OCI-LY7 (cell line): ENCODE measurements at regions of chr18 and their contacts with region 1.

Region 1: DNA sequence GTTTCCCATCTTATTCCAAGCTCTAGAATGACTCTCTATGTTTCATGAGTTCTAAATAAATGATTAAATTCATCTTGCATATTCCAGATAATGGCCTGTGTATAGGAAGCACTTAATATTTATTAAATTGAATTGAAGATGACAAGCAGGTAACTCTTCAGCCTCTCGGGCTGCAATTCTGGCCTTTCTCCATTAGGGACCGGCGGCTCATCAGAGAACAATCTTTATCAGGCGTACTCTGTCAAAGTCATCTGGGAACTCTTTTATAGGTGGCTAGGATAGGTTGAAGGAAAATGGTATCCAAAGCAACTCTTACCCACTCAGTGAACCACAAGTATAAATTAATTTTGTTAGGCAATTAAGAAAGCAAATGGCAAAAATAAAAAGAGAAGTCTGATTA is 308.5 kb downstream of the NOL4 start:
- DNase-seq: no peak
- H3K4me3 ChIP-seq: no peak overlapping the region
- H3K27ac ChIP-seq: no peak overlapping the region
- H3K4me1 ChIP-seq: peaks cover 29% of the 10 kb centered on the region
- CTCF ChIP-seq: 0 out of 2 replicates have a peak, but pooled peaks have one; percentile 27

Region 2: DNA sequence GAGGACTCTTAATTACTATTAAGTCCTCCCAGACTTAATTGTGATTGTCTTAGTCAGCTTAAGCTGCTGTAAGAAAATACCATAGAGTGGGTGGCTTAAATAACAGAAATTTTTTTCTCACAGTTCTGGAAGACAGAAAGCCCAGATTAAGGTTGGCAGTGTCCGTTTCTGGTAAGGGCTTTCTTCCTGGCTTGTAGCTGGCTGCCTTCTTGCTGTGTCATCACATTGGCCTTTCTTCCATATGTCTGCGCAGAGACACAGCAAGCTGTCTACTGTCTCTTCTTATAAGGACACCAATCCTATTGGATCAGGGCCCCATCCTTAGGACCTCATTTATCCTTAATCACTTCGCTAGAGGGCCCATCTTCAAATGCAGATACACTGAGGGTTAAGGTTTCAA is 299.6 kb before region 1 on chr18:
- CTCF ChIA-PET with region 1: no interaction called
- POLR2A ChIA-PET with region 1: no interaction called
- intact Hi-C with region 1: no loop called
- DNase-seq: no peak
- H3K4me3 ChIP-seq: no peak overlapping the region
- H3K27ac ChIP-seq: peak overlapping the region; percentile 88
- H3K4me1 ChIP-seq: peaks cover 61% of the 10 kb centered on the region
- CTCF ChIP-seq: no peak

Region 3: DNA sequence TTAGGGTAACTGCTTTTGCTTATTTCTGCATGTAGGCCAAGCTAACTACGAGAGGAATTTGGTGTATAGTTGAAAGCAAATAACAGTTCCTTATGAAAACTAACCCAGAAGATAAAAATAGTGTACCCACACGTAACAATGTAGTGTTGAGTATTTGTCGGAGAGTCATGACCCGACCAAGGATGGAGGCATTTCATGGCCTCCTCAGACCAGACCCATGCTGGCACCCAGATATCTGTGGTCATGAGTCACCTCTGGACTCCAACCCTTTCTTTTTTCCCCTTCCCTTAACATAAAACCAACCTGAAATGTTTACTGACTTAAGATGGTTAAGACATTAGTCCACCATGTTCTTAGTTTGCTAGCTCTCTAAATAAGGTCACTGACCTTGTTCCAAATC is 10.2 kb before region 1 on chr18:
- CTCF ChIA-PET with region 1: no interaction called
- POLR2A ChIA-PET with region 1: interaction called, 10 read pairs
- intact Hi-C with region 1: no loop called
- DNase-seq: no peak
- H3K4me3 ChIP-seq: no peak overlapping the region
- H3K27ac ChIP-seq: no peak overlapping the region
- H3K4me1 ChIP-seq: peaks cover 9% of the 10 kb centered on the region
- CTCF ChIP-seq: no peak

Region 4: GRCh38 chr18:34207344-34207851 is 291.2 kb after region 1 on chr18:
- CTCF ChIA-PET with region 1: no interaction called
- POLR2A ChIA-PET with region 1: no interaction called
- intact Hi-C with region 1: no loop called
- DNase-seq: no peak
- H3K4me3 ChIP-seq: no peak overlapping the region
- H3K27ac ChIP-seq: no peak overlapping the region
- H3K4me1 ChIP-seq: no peaks in the 10 kb centered on the region
- CTCF ChIP-seq: no peak